MCF 10A (cell line): ENCODE measurements at regions of chr19 and their contacts with region 1.

Region 1: DNA sequence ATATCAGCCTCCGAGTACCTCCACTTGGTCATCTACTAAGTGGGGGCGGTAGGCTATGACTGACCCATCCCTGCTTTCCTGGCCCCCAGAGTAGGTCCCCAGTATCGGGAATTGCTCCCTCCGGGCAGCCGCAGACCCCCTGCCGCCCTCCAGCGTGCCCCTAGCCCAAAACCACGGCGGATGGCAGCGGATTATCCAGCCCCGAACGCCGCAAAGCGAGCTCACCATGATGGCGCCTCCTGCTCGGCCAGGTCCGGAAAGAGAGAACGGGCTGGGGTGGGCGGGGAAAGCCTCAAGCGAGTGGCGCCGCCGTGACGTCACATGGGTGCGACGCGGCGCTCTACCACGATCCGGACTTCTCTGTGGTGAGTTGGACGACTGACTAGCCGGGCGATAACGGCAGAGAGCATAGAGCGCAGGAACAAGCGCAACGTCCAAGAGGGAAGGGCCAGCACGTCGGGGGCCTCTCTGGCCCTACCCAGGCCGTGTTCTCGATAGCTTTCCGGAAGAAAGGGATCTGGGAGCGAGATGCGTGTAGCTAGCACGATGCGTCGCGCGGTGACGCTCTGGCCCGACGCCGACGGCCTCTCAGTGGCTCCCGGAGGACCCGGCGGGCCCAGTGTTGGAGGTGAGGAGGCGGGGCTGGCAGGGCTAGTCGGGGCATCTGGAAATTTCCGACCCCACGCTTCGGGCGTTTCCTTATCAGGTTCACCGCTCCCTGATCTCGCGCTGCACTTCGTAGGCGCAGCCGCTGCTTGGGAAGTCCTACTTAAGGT is at the starts of genes RPL18 and SPHK2:
- DNase-seq: peak; percentile 99
- H3K4me3 Mint-ChIP-seq: peak within 1 kb of the TSS; percentile 87
- H3K27ac Mint-ChIP-seq: peak within 1 kb of the TSS; percentile 96
- H3K4me1 Mint-ChIP-seq: peaks cover 52% of the 10 kb centered on the region
- H3K27me3 Mint-ChIP-seq: no peaks in the 10 kb centered on the region
- CTCF ChIP-seq: no peak
- total RNA-seq, gene RPL18: 1,536 and 1,736 TPM in 2 replicates
- total RNA-seq, gene SPHK2: 16.3 and 18.2 TPM in 2 replicates

Region 2: DNA sequence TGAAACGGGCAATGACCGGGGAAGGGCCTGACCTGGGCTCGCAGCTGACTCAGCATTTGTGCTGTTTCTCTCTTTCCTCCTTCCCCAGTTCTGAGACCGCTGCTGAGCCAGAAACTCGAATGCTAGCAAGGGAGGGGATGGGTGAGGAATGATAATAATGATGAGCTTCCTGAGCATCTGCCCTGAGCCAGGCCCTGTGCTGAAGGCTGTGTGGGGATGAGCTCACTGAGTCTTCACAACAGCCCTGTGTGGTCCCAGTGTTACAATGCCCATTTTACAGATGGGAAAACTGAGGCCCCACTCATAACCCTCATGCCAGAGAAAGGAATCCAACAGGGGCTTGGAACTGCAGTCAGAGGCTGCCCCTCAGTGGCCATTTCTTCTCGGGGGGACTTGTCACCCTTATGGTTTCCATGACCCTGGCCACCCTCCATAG is 59.0 kb before region 1 on chr19:
- CTCF ChIA-PET with region 1: no interaction called
- POLR2A ChIA-PET with region 1: no interaction called
- intact Hi-C with region 1: no loop called
- DNase-seq: no peak
- H3K4me3 Mint-ChIP-seq: no peak overlapping the region
- H3K27ac Mint-ChIP-seq: no peak overlapping the region
- H3K4me1 Mint-ChIP-seq: peaks cover 8% of the 10 kb centered on the region
- H3K27me3 Mint-ChIP-seq: no peaks in the 10 kb centered on the region
- CTCF ChIP-seq: no peak

Region 3: GRCh38 chr19:48608798-48609263 is 10.3 kb before region 1 on chr19:
- CTCF ChIA-PET with region 1: interaction called, 6 read pairs
- POLR2A ChIA-PET with region 1: interaction called, 19 read pairs
- intact Hi-C with region 1: no loop called
- DNase-seq: peak; percentile 79
- H3K4me3 Mint-ChIP-seq: no peak overlapping the region
- H3K27ac Mint-ChIP-seq: no peak overlapping the region
- H3K4me1 Mint-ChIP-seq: peaks cover 5% of the 10 kb centered on the region
- H3K27me3 Mint-ChIP-seq: no peaks in the 10 kb centered on the region
- CTCF ChIP-seq: peak; percentile 66

Region 4: GRCh38 chr19:48637170-48637947 is 18.3 kb after region 1 on chr19 and contains the start of gene DBP:
- CTCF ChIA-PET with region 1: interaction called, 10 read pairs
- POLR2A ChIA-PET with region 1: interaction called, 108 read pairs
- intact Hi-C with region 1: loop called (anchors 2 kb)
- DNase-seq: peak; percentile 99
- H3K4me3 Mint-ChIP-seq: peak within 1 kb of the TSS; percentile 91
- H3K27ac Mint-ChIP-seq: peak within 1 kb of the TSS; percentile 99
- H3K4me1 Mint-ChIP-seq: peaks cover 24% of the 10 kb centered on the region
- H3K27me3 Mint-ChIP-seq: no peaks in the 10 kb centered on the region
- CTCF ChIP-seq: no peak
- total RNA-seq, gene DBP: 0.25 and 0.56 TPM in 2 replicates

Region 5: DNA sequence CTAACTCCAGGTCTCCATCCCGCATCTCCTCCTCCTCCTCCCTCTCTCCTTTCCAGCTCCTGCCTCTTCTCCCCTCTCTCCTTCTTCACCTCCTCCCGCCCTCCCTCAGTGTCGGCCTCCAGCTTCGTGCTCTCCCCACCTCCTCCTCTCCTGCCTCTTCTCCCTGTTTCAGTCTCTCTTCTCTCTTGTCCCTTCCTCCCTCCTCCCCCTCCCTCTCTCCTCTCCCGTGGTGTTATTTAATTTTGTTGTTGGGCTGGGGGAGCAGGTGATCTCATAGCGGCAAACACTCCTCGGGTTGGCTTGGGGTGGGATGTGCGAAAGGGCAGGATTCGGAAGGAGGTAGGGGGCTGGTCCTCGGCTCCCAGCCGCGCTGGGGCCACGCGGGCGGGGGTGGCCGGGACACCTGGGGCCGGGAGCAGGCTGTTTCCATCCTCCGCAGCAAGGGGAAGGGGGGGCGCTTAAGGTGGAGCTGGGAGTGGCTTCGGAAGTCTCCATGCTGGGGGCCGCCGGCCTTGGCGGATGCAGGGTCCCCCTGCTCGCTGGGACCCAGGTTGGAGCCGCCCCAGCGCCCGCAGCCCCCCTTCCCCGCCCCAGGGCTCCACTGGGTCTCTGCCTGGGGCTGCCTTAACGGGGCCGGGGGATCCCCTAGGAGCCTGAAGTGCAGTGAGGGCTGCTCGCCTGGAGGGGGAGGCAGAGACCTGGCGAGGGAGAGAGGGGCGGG is 27.1 kb after region 1 on chr19 and contains the start of gene CA11:
- CTCF ChIA-PET with region 1: no interaction called
- POLR2A ChIA-PET with region 1: interaction called, 22 read pairs
- intact Hi-C with region 1: no loop called
- DNase-seq: peak; percentile 90
- H3K4me3 Mint-ChIP-seq: peak within 1 kb of the TSS; percentile 73
- H3K27ac Mint-ChIP-seq: peak within 1 kb of the TSS; percentile 4
- H3K4me1 Mint-ChIP-seq: peaks cover 24% of the 10 kb centered on the region
- H3K27me3 Mint-ChIP-seq: peaks cover 10% of the 10 kb centered on the region
- CTCF ChIP-seq: peak; percentile 89
- total RNA-seq, gene CA11: 2.6 and 2.9 TPM in 2 replicates

Region 6: DNA sequence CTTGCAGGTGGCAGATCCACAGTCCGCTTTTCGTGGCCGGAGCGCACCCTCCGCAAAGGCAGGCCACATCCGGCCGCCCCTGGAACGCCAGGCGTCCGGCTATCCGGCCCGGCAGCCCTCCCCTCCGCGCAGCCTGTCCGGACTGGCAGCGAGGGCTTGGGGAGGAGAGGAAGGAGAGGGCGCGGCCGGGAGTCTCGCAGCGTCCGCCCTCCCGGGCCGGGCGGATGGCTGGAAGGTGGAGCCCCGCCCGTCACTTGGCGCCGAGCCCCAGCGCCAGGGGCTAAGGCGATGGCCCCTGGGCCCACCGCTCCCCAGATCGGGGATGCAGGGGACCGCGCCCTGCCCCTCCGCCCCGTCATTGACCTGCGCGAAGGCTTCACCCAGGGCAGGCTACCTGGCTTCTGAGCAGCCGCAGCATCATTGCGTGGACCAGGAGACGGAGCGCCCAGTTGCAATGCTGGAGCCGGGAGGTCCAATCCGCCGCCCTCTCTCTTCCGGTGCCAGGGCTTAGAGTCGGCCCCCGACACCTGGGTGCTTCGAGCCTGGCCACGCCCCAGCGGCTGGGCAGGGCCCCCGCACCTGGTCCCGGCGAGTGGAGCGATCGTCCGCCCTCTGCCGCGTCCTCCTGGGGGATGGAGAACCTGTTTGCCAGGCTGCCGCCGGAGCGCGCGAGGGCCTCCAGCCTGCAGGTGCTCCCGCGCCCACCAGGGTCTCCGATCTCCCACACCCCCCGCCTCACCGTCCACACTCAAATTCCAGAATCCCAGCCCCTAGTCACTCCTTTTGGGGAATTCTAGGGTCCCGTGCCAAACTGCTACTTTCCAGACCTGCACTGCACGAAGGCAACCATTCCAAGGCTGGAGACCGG is 133.6 kb after region 1 on chr19 and contains the start of gene FUT1:
- CTCF ChIA-PET with region 1: no interaction called
- POLR2A ChIA-PET with region 1: no interaction called
- intact Hi-C with region 1: no loop called
- DNase-seq: peak; percentile 91
- H3K4me3 Mint-ChIP-seq: peak within 1 kb of the TSS; percentile 77
- H3K27ac Mint-ChIP-seq: peak within 1 kb of the TSS; percentile 17
- H3K4me1 Mint-ChIP-seq: peaks cover 29% of the 10 kb centered on the region
- H3K27me3 Mint-ChIP-seq: no peaks in the 10 kb centered on the region
- CTCF ChIP-seq: no peak
- total RNA-seq, gene FUT1: 10.5 and 14.7 TPM in 2 replicates